Aorta (tissue), 5 donors: ENCODE measurements at regions of chr16 and their contacts with region 1.

Region 1: DNA sequence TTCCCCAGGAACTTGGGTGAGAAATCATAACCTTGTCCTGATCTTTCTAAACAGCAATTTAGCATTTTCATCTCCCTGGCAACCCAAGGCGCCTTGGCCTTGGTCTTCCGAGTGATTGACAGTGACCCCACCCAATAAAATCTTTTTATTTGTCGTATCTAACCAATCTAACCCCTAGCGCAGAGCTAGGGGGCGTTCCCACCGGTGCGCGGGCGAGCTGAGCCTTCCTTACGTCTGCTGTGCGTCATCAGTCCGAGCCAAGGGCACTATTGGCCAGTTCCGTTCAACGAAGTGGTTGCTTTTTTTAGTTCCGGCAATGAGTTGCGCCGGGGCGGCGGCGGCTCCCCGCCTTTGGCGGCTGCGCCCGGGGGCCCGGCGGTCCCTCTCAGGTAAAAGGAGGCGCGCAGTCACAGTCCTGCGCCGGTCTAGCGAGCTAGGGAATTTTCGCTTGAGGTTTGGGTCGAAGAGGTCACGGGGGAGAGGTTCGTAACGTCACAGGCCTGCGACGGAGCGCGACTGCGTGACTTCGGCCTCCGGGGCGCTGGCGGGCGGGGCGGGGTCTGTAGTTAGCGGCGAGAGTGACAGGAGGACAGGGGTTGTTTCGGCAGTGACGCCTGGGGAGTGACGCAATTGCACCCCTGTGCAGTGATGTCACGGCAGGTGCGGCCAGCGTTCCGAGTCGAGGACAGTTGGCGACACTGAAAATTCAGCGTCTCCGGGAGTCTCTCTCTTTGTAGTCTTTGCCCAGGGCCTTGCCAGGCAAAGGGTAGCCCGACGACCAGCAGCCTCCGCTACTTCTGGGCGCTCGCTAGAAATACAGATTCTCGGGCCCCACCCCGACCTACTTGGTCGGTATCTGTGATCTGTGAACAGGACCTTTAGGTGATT is at the start of gene COQ7:
- DNase-seq: peak; percentile 99
- ATAC-seq: peak; percentile 99
- H3K4me3 ChIP-seq: peak within 1 kb of the TSS; percentile 82 to 98
- H3K27ac ChIP-seq: peak within 1 kb of the TSS; percentile 95 to 100
- H3K4me1 ChIP-seq: no peaks in the 10 kb centered on the region
- H3K27me3 ChIP-seq: no peaks in the 10 kb centered on the region
- total RNA-seq, gene COQ7: 18.7 to 19.2 TPM

Region 2: GRCh38 chr16:18801197-18801972 is 266.2 kb before region 1 on chr16 and contains the start of gene ARL6IP1:
- intact Hi-C with region 1: loop called in 1 of 2 experiments (anchors 5 kb)
- DNase-seq: peak; percentile 99 to 100
- ATAC-seq: peak; percentile 100
- H3K4me3 ChIP-seq: peak within 1 kb of the TSS; percentile 70 to 85
- H3K27ac ChIP-seq: peak within 1 kb of the TSS; percentile 39 to 76
- H3K4me1 ChIP-seq: peaks cover 0 to 7% of the 10 kb centered on the region in 2 donors
- H3K27me3 ChIP-seq: no peaks in the 10 kb centered on the region
- total RNA-seq, gene ARL6IP1: 58.6 to 69.4 TPM

Region 3: DNA sequence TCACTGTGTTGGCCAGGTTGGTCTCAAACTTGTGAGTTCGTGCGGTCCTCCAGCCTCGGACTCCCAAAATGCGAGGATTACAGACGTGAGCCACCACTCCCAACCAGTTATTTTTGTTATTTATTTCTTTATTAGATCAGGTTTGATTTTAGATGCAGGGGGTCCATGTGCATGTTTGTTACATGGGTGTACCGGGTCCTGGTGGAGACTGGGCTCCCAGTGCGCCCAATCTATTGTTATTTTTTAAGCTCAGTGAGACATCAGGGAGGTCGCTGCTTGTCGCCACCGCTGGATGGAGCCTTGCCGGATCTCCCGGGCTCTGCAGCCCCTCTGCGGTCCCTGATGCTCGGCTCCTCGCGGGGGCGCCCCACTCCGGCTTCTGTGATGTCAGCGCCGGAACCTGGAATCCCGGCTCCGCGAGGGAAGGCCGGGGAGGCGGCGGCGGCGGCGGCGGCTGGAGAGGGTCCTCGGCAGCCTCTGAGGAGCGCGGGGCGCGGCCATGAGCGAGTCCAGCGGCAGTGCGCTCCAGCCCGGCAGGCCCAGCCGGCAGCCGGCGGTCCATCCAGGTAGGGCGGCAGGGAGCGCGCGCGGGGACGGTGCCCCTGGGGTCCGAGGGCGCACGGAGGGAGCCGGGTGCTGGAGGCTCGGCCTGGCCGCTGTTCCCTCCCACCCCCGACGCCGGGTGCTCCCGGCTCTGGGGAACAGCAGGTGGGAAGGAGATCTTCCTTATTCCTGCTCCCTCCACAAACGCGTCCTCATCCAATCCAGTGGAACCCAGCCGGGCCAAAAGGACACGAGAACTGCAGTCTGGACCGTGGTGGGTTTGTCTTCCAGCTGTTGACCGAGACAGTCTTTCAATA is 83.8 kb before region 1 on chr16 and contains the start of gene TMC7:
- intact Hi-C with region 1: loop called in 1 of 2 experiments (anchors 2 kb)
- DNase-seq: peak; percentile 83 to 93
- ATAC-seq: peak; percentile 86
- H3K4me3 ChIP-seq: peak within 1 kb of the TSS; percentile 27 to 34
- H3K27ac ChIP-seq: no peak within 1 kb of the TSS
- H3K4me1 ChIP-seq: no peaks in the 10 kb centered on the region
- H3K27me3 ChIP-seq: no peaks in the 10 kb centered on the region
- total RNA-seq, gene TMC7: 1.4 to 4.2 TPM

Region 4: GRCh38 chr16:18999045-18999393 is 68.6 kb before region 1 on chr16:
- intact Hi-C with region 1: loop called in 1 of 2 experiments (anchors 5 kb)
- DNase-seq: no peak
- ATAC-seq: no peak
- H3K4me3 ChIP-seq: no peak overlapping the region
- H3K27ac ChIP-seq: no peak overlapping the region
- H3K4me1 ChIP-seq: peaks cover 0 to 4% of the 10 kb centered on the region in 2 donors
- H3K27me3 ChIP-seq: no peaks in the 10 kb centered on the region